Activated CD4-positive, alpha-beta memory T cell treated with anti-CD3 and anti-CD28 coated beads for 36 hours (primary cell): ENCODE measurements at regions of chr4 and their contacts with region 1.

Region 1: DNA sequence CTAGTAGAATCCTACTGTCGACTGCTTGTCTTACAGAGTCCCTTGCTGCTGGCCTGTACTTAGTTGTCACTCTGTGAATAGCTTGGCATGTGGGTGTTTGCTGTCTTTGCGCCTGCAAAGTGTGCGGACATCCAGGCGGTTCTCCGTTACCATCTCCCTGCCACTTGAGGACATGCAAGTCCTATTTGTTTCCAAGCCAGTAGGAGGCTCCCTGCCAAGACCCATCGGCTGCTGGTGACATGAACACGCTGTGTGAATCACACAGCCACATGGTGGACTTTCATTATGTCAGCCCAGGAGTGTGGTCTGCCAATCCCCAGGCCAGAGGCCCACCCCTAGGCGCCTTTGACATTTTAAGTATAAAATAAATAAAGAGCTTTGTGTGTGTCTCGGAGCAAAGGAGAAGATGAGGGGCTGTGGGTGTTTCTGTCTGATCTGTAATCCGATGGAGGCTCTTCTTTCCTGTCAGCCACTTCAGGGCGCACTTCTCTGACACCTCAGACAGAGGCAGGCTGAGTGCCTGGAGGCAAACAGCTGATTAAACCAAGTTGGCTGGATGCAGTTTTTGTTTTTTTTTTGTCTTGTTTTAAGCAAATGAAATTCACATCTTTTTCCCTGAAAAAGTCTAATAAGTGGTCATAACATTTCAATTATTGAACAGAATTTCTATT is 51.5 kb downstream of the ALPK1 start:
- DNase-seq: no peak
- H3K4me3 Mint-ChIP-seq: no peak overlapping the region
- H3K27ac Mint-ChIP-seq: no peak overlapping the region
- H3K4me1 Mint-ChIP-seq: no peaks in the 10 kb centered on the region
- H3K27me3 Mint-ChIP-seq: no peaks in the 10 kb centered on the region

Region 2: DNA sequence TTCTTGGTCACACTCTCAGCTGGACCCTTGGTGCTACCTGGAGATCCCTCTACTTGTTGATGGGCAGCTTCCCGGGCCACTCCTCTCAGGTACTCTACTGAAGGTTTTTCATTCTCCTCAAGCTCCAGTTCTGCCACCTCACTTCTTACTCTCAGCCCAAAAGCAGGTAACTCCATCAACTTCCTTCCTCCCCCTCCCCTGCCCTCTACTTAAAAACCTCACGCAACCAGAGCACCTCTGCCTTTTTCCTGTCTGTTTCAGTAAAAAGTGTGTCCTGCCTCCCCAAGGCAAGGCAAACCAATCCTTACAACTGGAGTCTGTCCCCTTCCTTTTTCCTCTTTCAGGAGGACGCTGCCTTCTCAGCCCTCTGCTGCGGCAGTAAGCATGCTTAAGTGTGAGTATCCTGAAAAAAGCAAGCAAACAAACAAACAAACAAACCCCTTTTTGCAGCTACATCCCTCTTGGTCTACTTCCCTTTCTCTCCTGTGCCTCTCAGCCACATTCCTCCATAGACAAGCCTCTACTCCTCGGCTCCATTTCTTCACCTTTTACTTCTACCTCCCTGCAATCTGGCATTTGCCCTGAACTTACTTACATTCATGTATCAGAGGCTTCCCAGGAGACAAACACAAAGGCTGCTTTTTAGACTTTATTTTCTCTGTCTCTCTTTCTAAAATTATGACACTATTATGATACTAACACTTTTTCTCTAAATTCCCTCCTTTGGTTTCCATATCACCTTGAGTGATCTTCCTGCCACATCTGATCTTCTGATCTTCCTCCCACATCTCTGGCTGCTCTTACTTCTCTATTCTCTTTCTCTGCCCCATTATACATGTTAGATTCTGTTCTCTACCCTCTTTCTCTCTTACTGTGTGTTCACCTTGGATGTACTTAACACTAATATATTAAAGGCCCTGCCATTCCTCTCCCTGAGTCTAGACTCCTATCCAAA is 46.0 kb before region 1 on chr4:
- CTCF ChIA-PET with region 1: no interaction called
- POLR2A ChIA-PET with region 1: no interaction called
- intact Hi-C with region 1: no loop called
- DNase-seq: peak; percentile 29
- H3K4me3 Mint-ChIP-seq: no peak overlapping the region
- H3K27ac Mint-ChIP-seq: no peak overlapping the region
- H3K4me1 Mint-ChIP-seq: peaks cover 21% of the 10 kb centered on the region
- H3K27me3 Mint-ChIP-seq: no peaks in the 10 kb centered on the region

Region 3: DNA sequence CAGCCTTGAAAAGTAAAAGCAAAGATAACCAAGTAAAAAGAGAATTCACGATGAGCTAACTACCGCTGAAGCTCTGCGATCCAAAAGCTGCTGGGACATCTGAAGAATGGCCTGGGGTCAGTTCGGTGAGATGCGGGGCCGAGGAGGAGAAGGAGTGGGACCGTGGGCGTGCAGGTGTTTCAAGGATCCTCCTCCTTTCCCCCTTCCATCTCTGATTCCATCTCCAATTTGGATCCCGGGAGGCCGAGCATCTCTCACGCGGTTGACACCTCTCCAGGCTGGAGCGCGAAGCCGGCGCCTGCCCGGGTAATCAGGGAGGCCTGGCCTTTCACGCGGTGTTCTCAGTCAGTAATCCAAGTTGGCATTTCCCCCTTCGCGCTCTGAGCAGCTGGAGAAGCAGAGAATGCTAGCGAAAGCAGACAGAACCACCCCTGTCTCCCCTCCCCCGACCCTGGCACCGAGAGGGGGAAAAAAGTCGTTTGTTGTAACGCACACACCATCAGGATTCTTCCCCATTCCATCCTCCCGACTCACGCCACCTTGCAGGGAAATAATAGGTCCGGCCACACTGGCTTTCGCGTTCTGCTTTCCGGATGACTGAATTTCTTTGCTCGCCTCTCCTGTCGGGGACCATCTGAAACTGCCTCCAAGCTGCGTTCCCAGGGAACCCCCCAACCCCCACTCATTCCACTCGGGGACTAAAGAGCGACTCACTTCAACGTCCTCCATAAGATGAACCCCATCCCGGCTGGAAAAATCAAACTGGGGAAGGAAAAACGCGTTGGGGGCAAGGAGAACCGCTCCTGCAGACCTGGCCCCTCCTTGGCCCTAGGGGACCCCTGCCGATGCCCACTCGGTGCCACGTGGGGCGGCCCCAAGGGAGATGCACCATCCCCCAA is 160.9 kb after region 1 on chr4:
- CTCF ChIA-PET with region 1: no interaction called
- POLR2A ChIA-PET with region 1: no interaction called
- intact Hi-C with region 1: loop called (anchors 5 kb)
- DNase-seq: peak; percentile 19
- H3K4me3 Mint-ChIP-seq: peak overlapping the region; percentile 45
- H3K27ac Mint-ChIP-seq: no peak overlapping the region
- H3K4me1 Mint-ChIP-seq: peaks cover 30% of the 10 kb centered on the region
- H3K27me3 Mint-ChIP-seq: peaks cover 76% of the 10 kb centered on the region